ENCODE measurements at regions of chr17 and their contacts with region 1.

Region 1: GRCh38 chr17:16589097-16589969 is 20.3 kb upstream of the ZNF287 start:
- DNase-seq: peak; percentile 93 to 94
- H3K4me3 ChIP-seq: peak overlapping the region in 2 of 3 donors; percentile 42 to 48
- H3K27ac ChIP-seq: peak overlapping the region in 2 of 3 donors; percentile 24 to 42
- H3K4me1 ChIP-seq: peaks cover 3% of the 10 kb centered on the region in 2 donors
- H3K27me3 ChIP-seq: no peaks in the 10 kb centered on the region
- CTCF ChIP-seq: peak in 5 of 6 experiments; percentile 84 to 100 (median 98)
- POLR2A ChIP-seq: peak in 1 of 2 donors; percentile 69

Region 2: DNA sequence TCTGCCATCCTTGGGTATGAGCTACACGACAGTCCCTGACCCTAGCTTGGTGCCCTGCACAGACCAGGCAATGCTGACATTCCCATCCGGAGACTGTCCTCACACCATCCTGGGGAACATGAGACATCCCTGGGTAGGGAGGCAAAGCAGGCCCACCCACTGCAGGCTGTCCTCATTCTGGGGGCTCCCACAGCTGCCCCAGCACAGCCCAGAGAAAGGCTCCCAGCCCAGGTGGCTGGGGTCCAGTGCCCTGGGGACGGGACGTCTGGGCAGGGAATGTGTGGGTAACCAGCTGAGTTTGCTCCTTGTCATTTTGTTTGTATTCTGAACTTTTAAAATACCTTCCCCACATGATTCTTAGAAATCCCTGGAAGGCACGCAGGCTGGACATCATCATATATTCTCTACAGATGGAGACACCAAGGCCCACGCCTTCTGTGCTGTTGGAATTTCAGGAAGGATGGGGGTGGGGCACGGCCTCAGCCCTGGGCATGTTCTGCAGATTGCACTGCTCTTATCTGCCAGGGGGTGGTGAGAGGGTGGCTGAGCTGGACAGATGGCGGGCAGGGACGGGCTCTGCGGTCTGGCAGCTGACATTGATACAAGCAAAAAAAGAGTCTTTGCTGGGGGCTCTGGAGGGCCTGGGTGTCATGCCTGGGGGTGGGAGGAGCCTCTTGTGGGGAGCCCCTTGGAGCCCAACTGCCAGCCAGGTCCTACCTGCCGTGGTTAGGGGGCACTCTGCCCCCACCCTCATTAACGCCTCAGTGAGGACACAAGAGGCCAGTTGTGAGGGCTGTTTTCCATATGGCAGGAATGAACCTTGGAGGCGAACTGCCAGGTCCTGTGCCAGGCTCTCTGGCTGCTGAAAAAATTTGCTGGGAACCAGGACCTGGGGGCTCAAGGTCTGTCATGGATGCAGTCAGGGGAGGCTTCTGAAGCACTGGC is 125.7 kb before region 1 on chr17:
- intact Hi-C with region 1: no loop called
- DNase-seq: peak; percentile 88 to 90
- H3K4me3 ChIP-seq: no peak overlapping the region
- H3K27ac ChIP-seq: peak overlapping the region; percentile 66 to 76 (median 66)
- H3K4me1 ChIP-seq: peaks cover 19 to 29% of the 10 kb centered on the region in 2 donors
- H3K27me3 ChIP-seq: no peaks in the 10 kb centered on the region
- CTCF ChIP-seq: peak in 5 of 6 experiments; percentile 24 to 69 (median 50)
- POLR2A ChIP-seq: no peak

Region 3: DNA sequence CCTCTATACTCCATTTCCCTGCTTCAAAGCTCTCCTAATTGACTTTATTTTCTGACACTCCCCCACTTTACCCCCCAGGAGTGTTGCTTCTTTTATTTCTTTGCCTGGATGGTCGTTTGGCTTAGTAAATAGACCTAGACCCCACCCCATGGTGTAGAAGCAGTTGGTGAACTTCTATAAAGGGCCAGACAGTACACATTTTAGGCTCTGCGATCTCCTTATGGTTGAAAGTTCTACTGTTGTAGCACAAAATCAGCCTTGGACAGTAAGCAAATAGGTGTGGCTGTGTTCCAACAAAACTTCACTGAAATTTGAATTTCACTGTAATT is 52.2 kb before region 1 on chr17:
- intact Hi-C with region 1: loop called (anchors 10 kb)
- DNase-seq: no peak
- H3K4me3 ChIP-seq: no peak overlapping the region
- H3K27ac ChIP-seq: peak overlapping the region in 2 of 3 donors; percentile 25 to 95
- H3K4me1 ChIP-seq: peaks cover 0 to 11% of the 10 kb centered on the region in 2 donors
- H3K27me3 ChIP-seq: no peaks in the 10 kb centered on the region
- CTCF ChIP-seq: no peak
- POLR2A ChIP-seq: no peak